ENCODE measurements at regions of chr11 and their contacts with region 1.

Region 1: GRCh38 chr11:129750349-129751292 is 65.0 kb upstream of the TMEM45B start:
- DNase-seq: peak; percentile 72
- CTCF ChIP-seq: peak; percentile 100

Region 2: DNA sequence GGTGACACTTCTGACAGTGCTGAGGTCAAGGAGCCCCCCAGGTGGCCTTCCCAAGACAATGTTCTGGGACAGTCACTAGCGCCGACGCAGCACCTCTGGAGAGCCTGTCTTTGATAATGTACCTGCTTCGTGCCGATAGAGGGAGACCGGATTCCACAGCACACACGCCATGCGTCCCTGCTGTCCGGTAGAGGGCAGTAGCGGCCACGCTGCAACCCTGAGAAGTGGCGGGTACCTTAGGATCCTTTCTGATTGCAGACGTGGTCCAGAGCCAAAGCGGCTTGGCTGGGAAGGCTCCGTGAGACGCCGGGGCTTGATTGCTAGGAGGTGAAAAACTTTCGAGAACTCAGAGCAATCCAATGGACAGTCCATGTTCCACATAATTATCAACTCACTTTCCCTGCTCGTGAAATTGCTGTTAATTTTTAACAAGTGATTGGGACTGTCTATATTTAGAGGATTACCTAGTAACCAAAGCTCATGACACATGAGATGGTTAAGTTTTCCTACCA is 386.4 kb before region 1 on chr11:
- CTCF ChIA-PET with region 1: interaction called, 53 read pairs
- POLR2A ChIA-PET with region 1: no interaction called
- DNase-seq: peak; percentile 69
- CTCF ChIP-seq: peak; percentile 100

Region 3: DNA sequence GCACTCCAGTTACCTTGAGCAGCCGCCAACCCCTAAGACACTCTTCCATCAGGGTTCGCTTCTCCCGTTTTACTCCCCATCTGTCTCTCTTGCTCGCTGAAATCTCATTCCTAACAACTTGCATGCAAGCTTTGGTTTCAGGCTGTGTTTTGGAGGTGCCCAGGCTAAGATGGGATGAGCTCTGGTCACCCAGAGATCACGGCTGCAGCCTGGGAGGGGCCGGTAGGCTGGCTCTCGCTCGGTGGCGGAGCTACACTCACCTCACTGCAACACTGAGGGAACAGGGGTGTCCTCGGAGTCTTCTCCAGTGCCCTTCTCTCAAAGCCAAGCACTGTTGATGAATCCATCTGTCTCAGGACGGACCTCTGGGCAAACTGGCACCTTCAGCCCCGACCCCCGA is 177.5 kb before region 1 on chr11:
- CTCF ChIA-PET with region 1: no interaction called
- POLR2A ChIA-PET with region 1: no interaction called
- DNase-seq: no peak
- CTCF ChIP-seq: no peak

Region 4: GRCh38 chr11:129766898-129767604 is 16.4 kb after region 1 on chr11:
- CTCF ChIA-PET with region 1: interaction called, 14 read pairs
- POLR2A ChIA-PET with region 1: no interaction called
- DNase-seq: no peak
- CTCF ChIP-seq: peak; percentile 25

Measured in GM10248 (cell line).